ENCODE measurements at regions of chr5 and their contacts with region 1.

Region 1: DNA sequence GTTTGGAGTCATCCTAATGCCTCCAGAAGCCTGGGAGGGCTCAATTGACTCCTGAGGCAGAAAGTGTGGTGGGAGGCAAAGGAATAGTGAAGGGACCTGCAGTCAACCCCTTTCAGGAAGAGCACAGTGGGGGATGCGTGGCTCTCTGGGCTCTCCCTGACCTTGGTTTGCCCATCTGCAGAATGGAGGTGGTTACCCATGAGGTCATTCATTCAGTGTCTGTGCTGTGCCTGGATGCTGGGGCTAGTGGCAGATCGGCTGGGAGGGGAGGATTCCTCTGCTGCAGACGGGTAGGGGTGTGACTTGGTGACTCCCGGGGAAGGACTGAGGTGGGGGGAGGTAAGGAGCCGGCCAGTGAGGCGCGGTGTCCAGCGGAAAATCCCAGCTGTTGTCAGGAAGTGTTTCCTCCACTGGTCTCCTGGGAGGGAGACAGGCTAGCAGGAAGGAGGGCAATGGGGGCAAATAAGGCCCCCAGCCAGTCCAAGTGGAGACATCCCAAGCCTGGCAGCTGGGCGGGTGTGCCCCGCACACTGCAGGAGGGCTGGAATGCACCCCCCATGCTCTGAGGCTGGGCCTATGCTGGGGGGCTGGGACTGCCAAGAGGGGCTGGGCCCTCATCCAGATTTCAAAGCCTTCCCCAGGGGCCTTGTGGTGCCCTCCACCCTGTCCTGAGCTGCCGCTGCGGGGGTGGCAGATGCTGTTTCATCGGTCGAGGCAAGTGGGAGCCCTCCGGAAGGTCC is 10.9 kb downstream of the CXXC5 start:
- DNase-seq: peak; percentile 66 to 84
- ATAC-seq: peak; percentile 2 to 55 (median 29)
- H3K4me3 ChIP-seq: peak overlapping the region in 9 of 10 donors; percentile 13 to 49 (median 37)
- H3K27ac ChIP-seq: peak overlapping the region; percentile 86 to 97 (median 92)
- H3K4me1 ChIP-seq: peaks cover 69 to 100% (median 87%) of the 10 kb centered on the region in 9 donors
- H3K27me3 ChIP-seq: no peaks in the 10 kb centered on the region
- CTCF ChIP-seq: no peak

Region 2: GRCh38 chr5:139588962-139589361 is 70.1 kb before region 1 on chr5:
- intact Hi-C with region 1: no loop called
- DNase-seq: no peak
- ATAC-seq: peak in 1 of 8 donors; percentile 22
- H3K4me3 ChIP-seq: no peak overlapping the region
- H3K27ac ChIP-seq: no peak overlapping the region
- H3K4me1 ChIP-seq: peaks cover 2 to 50% (median 24%) of the 10 kb centered on the region in 9 donors
- H3K27me3 ChIP-seq: no peaks in the 10 kb centered on the region
- CTCF ChIP-seq: no peak

Region 3: DNA sequence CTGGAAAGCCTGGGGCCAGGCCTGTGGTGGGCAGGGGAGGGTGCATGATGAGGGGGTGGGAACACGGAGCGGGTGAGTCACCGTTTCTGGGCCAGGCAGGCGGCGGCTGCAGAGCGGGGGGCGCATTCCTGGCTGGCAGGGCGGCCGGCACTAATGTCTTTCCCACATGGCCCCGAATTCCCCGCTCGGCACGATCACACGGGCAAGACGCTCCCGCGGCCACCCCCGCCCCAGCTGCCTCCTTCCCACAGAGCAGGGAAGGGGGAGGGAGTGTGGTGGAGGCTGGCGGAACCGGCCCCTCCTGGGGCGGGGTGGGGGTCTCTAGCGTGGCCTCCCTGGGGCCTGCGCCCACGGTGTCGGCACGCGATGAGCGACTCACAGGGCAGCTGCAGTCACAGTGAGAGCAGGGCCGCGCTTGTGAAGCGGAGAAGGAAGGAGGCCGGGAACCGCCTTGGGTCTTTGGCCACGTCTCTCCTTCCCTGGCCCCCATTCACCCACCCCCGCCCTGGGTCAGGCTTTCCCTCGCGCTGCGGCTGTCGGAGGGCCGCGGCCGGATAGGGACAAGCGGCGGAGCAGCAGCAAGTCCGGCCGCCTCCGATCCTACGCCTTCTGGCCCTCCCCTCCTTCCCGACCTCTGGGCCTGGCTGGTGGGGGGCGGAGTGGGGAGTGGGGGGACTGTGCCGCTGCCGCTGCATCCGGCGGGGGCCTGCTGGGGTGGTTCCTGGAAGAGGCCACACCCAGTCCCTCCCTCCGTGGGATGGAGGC is 38.0 kb after region 1 on chr5:
- intact Hi-C with region 1: loop called in 2 of 10 experiments (anchors 5 kb)
- DNase-seq: peak; percentile 85 to 87
- ATAC-seq: peak; percentile 79 to 90 (median 83)
- H3K4me3 ChIP-seq: peak overlapping the region; percentile 20 to 63 (median 45)
- H3K27ac ChIP-seq: peak overlapping the region; percentile 87 to 98 (median 90)
- H3K4me1 ChIP-seq: peaks cover 15 to 78% (median 51%) of the 10 kb centered on the region in 9 donors
- H3K27me3 ChIP-seq: peaks cover 0 to 36% (median 0%) of the 10 kb centered on the region in 7 donors
- CTCF ChIP-seq: no peak